Activated CD4-positive, alpha-beta memory T cell treated with anti-CD3 and anti-CD28 coated beads for 36 hours (primary cell): ENCODE measurements at regions of chr7 and their contacts with region 1.

Region 1: DNA sequence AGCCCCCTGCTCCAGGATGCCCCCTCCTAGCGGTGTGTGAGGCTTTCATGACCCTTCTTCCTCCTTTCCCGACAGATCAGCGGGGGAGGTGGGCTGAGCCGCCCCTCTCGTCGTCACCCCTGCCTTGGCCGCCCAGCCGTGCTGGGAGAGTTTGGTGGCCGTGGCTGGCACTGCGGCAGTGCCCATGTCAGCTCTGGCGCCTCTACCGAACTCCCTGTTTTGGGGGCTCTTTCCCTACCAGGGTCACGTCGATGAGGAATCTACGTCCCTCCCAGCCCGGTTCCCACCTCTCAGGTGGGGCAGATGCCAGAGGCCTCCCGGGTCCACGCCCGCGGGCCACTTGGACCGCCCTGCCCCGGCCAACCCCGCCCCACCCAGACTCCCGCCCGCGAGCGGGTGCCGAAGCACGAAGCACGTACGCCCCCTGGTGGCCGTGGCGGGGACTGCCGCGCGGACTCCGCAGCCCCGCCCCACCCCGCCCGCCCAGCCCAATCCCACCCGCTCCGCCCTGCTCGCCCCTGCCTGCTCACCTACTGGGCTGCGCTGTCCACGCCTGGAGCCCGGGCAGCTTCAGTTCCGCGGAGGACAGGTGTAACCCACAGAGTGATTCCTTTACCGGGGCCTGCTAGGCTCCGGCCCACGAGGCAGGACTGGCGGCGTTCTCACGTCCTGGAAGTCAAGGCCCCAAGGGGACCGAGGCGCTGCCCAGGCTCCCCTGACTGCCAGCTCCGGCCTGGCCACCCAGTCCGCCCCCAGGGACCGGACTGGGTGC is 127.1 kb downstream of the UBE2H start:
- DNase-seq: peak; percentile 92
- H3K4me3 Mint-ChIP-seq: peak overlapping the region; percentile 89
- H3K27ac Mint-ChIP-seq: no peak overlapping the region
- H3K4me1 Mint-ChIP-seq: peaks cover 18% of the 10 kb centered on the region
- H3K27me3 Mint-ChIP-seq: no peaks in the 10 kb centered on the region

Region 2: GRCh38 chr7:129224251-129225205 is 601.2 kb before region 1 on chr7 and contains the start of gene AHCYL2:
- CTCF ChIA-PET with region 1: interaction called, 6 read pairs
- POLR2A ChIA-PET with region 1: no interaction called
- intact Hi-C with region 1: loop called (anchors 1 kb)
- DNase-seq: peak; percentile 99
- H3K4me3 Mint-ChIP-seq: peak within 1 kb of the TSS; percentile 87
- H3K27ac Mint-ChIP-seq: peak within 1 kb of the TSS; percentile 91
- H3K4me1 Mint-ChIP-seq: peaks cover 27% of the 10 kb centered on the region
- H3K27me3 Mint-ChIP-seq: no peaks in the 10 kb centered on the region
- total RNA-seq, gene AHCYL2: 16.4 to 17.1 TPM

Region 3: DNA sequence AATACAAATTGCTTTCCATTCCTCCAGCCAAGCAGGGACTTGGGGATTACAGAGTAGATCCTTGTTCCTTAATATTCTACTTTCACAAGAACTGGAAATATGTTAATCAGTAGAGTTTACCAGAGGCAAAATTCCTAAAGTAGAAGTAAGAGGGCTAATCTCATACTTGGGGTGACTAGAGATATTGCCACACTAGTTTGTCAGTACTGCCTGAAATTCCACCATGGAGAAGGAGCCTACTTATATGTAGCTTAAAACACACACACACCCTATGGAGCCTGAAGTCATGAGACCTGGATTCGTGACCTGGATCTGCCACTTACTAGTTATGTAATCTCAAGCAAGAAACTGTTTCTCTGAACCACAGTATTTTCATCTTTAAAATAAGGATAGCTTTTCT is 357.6 kb before region 1 on chr7:
- CTCF ChIA-PET with region 1: interaction called, 4 read pairs
- POLR2A ChIA-PET with region 1: no interaction called
- intact Hi-C with region 1: loop called (anchors 5 kb)
- DNase-seq: no peak
- H3K4me3 Mint-ChIP-seq: no peak overlapping the region
- H3K27ac Mint-ChIP-seq: no peak overlapping the region
- H3K4me1 Mint-ChIP-seq: peaks cover 13% of the 10 kb centered on the region
- H3K27me3 Mint-ChIP-seq: no peaks in the 10 kb centered on the region

Region 4: GRCh38 chr7:129664029-129665012 is 161.4 kb before region 1 on chr7:
- CTCF ChIA-PET with region 1: interaction called, 11 read pairs
- POLR2A ChIA-PET with region 1: no interaction called
- intact Hi-C with region 1: loop called (anchors 1 kb)
- DNase-seq: no peak
- H3K4me3 Mint-ChIP-seq: no peak overlapping the region
- H3K27ac Mint-ChIP-seq: no peak overlapping the region
- H3K4me1 Mint-ChIP-seq: peaks cover 2% of the 10 kb centered on the region
- H3K27me3 Mint-ChIP-seq: no peaks in the 10 kb centered on the region

Region 5: GRCh38 chr7:129780257-129780973 is 45.3 kb before region 1 on chr7:
- CTCF ChIA-PET with region 1: interaction called, 8 read pairs
- POLR2A ChIA-PET with region 1: no interaction called
- intact Hi-C with region 1: loop called (anchors 1 kb)
- DNase-seq: peak; percentile 88
- H3K4me3 Mint-ChIP-seq: peak overlapping the region; percentile 64
- H3K27ac Mint-ChIP-seq: no peak overlapping the region
- H3K4me1 Mint-ChIP-seq: peaks cover 29% of the 10 kb centered on the region
- H3K27me3 Mint-ChIP-seq: peaks cover 57% of the 10 kb centered on the region

Region 6: DNA sequence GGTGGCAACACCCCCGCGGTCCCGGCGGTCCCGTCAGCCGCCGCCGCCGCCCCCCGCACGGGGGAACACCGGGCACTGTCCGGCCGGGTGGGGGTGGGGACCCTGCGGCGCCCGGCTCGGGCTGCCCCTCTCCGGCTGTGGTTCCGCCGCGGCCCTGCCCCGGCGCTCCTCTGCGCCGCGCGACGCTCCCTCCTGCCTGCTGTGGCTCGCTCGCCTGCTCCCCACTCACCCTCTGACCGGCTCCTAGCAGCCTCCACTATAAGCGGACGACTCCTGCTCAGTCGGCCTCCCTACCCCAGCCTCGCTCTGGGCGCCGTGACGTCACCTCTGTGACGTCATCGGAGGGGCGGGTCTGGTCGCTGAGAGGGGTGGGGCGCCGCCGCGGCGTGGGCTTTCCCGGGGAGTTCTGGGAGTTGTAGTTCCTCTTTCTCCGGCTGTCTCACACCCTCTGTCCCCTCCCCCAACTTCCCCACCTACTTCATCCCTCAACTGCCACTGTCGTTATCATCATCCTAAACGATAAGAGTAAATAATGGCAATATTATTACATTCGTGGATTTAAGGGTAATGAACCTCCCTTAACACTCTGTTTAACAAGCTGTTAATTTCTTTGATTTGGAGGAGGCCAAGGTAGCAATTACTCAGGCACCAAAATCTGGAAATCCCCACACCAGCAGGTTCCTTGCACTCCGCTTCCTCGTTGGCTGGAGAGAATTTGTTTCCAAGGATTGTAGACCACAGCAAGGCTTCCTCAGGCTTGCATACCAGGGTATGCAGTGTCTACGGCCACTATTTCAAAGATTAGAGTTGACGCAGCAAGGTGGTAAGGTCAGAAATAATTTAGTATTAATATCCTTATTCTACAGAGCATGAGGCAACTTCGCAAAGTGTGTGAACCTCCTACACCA is 127.2 kb after region 1 on chr7 and contains the start of gene UBE2H:
- CTCF ChIA-PET with region 1: interaction called, 10 read pairs
- POLR2A ChIA-PET with region 1: interaction called, 5 read pairs
- intact Hi-C with region 1: loop called (anchors 5 kb)
- DNase-seq: peak; percentile 94
- H3K4me3 Mint-ChIP-seq: peak within 1 kb of the TSS; percentile 87
- H3K27ac Mint-ChIP-seq: peak within 1 kb of the TSS; percentile 90
- H3K4me1 Mint-ChIP-seq: peaks cover 7% of the 10 kb centered on the region
- H3K27me3 Mint-ChIP-seq: no peaks in the 10 kb centered on the region
- total RNA-seq, gene UBE2H: 33.6 to 37.1 TPM